IMR-90 (cell line): ENCODE measurements at regions of chr7 and their contacts with region 1.

Region 1: DNA sequence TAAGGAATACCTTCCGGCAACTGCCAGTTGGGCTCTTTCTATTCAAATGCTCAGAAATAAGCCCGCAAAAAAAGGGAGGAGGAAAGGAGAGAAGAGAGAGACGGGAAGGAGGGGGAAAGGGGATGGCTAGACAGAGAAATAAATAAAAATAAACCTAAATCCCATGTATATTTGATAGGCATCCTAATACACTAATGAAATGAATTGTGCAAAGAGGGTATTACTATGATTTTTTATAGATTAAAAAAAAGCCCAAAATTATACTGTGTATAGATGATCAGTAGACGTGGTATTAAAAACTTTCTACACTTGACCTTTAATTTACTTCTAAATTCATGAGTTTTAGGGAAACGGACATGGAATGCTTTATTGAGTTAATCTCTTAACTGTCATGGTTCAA is 89.9 kb downstream of the HBP1 start:
- DNase-seq: no peak
- ATAC-seq: no peak
- H3K4me3 ChIP-seq: no peak overlapping the region
- H3K27ac ChIP-seq: no peak overlapping the region
- H3K4me1 ChIP-seq: no peaks in the 10 kb centered on the region
- H3K27me3 ChIP-seq: no peaks in the 10 kb centered on the region
- CTCF ChIP-seq: no peak
- POLR2A ChIP-seq: no peak
- RAD21 ChIP-seq: no peak

Region 2: DNA sequence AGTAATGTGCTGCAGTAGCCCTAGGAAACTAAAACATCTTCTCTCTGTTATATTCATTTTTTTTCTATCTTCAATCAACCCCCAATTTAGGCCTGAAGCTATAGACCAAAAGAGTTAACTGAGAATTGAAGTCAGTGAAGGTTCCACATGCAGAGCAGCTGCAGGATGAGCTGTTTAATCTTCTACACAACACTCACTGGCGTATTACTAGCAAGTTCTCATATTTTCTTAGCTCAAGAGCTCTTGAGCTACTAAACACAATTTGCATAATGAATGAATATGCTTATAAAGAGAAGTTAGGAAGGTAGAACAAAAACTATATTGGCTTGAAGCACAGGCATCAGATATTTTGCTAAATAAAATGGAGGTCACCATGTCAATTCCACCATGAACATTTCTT is 169.9 kb after region 1 on chr7:
- CTCF ChIA-PET with region 1: no interaction called
- POLR2A ChIA-PET with region 1: no interaction called
- dilution Hi-C with region 1: no loop called
- in situ Hi-C with region 1: no loop called
- intact Hi-C with region 1: loop called (anchors 1 kb)
- DNase-seq: no peak
- ATAC-seq: no peak
- H3K4me3 ChIP-seq: no peak overlapping the region
- H3K27ac ChIP-seq: no peak overlapping the region
- H3K4me1 ChIP-seq: no peaks in the 10 kb centered on the region
- H3K27me3 ChIP-seq: no peaks in the 10 kb centered on the region
- CTCF ChIP-seq: no peak
- POLR2A ChIP-seq: no peak
- RAD21 ChIP-seq: no peak